ENCODE measurements at regions of chr17 and their contacts with region 1.

Region 1: GRCh38 chr17:30336369-30337171 is 2.7 kb upstream of the TMIGD1 start:
- DNase-seq: no peak
- ATAC-seq: peak in 1 of 4 donors; percentile 27
- H3K4me3 ChIP-seq: no peak overlapping the region
- H3K27ac ChIP-seq: no peak overlapping the region
- H3K4me1 ChIP-seq: peaks cover 0 to 30% (median 8%) of the 10 kb centered on the region in 12 donors
- H3K27me3 ChIP-seq: no peaks in the 10 kb centered on the region
- CTCF ChIP-seq: peak; percentile 13 to 59 (median 47)
- POLR2A ChIP-seq: no peak

Region 2: DNA sequence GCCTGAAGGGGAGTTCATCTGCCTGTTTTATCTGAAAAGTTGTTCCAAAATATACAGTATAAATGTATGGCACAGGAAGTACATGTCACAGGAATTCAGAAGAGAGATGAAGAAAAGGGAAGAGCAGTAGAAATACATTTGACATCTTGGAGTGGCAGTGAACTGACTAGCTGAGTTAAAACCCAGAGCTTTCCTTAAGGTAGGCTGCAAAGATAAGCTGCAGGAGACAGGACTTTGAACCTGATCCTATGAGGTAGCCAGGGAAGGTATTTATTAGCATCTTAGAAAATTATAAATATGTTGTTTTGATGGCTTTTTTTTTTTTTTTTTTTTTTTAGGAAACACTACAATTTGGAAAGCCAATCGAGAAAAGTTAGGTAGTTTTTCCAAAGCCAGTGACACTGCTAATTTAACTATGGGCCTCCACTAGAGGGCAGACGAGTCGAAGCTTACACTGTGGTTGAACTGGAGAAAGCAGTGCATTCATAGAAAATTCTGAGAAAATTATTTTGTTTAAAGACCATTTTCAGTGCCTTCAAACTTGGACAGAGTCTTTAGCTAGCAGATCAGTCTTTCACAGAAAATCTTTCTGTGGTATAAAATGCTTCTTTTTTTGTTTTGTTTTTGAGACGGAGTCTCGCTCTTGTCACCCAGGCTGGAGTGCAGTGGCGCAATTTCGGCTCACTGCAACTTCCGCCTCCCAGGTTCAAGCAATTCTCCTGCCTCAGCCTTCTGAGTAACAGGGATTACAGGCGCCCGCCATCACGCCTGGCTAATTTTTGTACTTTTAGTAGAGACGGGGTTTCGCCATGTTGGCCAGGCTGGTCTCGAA is 528.8 kb before region 1 on chr17:
- intact Hi-C with region 1: no loop called
- DNase-seq: peak in 4 of 5 donors; percentile 54 to 66 (median 60)
- ATAC-seq: peak in 3 of 4 donors; percentile 64 to 84 (median 72)
- H3K4me3 ChIP-seq: peak overlapping the region in 2 of 12 donors; percentile 18 to 36
- H3K27ac ChIP-seq: peak overlapping the region in 1 of 12 donors; percentile 60
- H3K4me1 ChIP-seq: peaks cover 0 to 4% (median 0%) of the 10 kb centered on the region in 12 donors
- H3K27me3 ChIP-seq: no peaks in the 10 kb centered on the region
- CTCF ChIP-seq: peak; percentile 63 to 88 (median 76)
- POLR2A ChIP-seq: no peak

Region 3: DNA sequence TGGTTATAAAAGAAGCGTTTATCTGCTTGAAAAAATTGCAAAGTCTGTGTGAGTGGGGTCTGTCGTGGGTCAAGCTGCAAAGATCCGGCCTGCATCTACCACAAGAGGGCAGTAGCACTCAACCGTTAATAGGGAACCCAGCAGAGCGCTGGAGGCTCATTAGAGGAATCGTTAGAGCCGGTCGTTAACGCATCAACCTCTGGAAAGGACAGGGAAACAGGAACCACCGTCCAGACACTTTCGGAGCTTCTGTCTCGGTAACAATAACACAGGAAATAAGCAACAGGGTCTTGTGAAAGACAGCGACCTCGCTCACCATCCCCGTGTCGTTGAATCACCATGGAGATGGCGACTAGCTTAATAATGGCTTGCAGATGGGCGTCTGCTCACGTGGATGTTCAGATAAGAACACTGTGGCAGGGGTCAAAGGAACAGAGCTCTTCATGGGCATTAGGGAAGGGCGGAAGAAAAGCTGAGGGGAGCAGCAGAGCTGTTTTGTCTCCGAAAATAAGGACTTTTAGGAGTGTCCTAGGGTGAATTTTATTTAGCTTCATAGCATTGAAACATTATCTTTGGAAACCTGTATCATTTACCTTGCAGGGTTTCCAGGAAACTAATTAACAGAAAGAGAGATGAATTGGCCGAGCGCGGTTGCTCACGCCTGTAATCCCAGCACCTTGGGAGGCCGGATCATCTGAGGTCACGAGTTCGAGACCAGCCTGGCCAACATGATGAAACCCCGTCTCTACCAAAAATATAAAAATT is 231.8 kb before region 1 on chr17:
- intact Hi-C with region 1: loop called in 3 of 10 experiments (anchors 2 to 10 kb)
- DNase-seq: peak; percentile 67 to 83 (median 75)
- ATAC-seq: peak; percentile 84 to 98 (median 98)
- H3K4me3 ChIP-seq: peak overlapping the region in 10 of 12 donors; percentile 19 to 61 (median 45)
- H3K27ac ChIP-seq: peak overlapping the region in 7 of 12 donors; percentile 1 to 54 (median 29)
- H3K4me1 ChIP-seq: peaks cover 0 to 10% (median 0%) of the 10 kb centered on the region in 12 donors
- H3K27me3 ChIP-seq: no peaks in the 10 kb centered on the region
- CTCF ChIP-seq: peak; percentile 86 to 96 (median 90)
- POLR2A ChIP-seq: no peak

Region 4: GRCh38 chr17:30124273-30124796 is 212.2 kb before region 1 on chr17:
- intact Hi-C with region 1: loop called in 3 of 10 experiments (anchors 5 to 10 kb)
- DNase-seq: no peak
- ATAC-seq: no peak
- H3K4me3 ChIP-seq: no peak overlapping the region
- H3K27ac ChIP-seq: no peak overlapping the region
- H3K4me1 ChIP-seq: peaks cover 0 to 48% (median 9%) of the 10 kb centered on the region in 12 donors
- H3K27me3 ChIP-seq: no peaks in the 10 kb centered on the region
- CTCF ChIP-seq: no peak
- POLR2A ChIP-seq: no peak

Region 5: GRCh38 chr17:30134551-30134950 is 202.0 kb before region 1 on chr17:
- intact Hi-C with region 1: loop called in 2 of 10 experiments (anchors 5 to 10 kb)
- DNase-seq: no peak
- ATAC-seq: no peak
- H3K4me3 ChIP-seq: no peak overlapping the region
- H3K27ac ChIP-seq: no peak overlapping the region
- H3K4me1 ChIP-seq: peaks cover 0 to 29% (median 7%) of the 10 kb centered on the region in 12 donors
- H3K27me3 ChIP-seq: no peaks in the 10 kb centered on the region
- CTCF ChIP-seq: no peak
- POLR2A ChIP-seq: no peak

Region 6: DNA sequence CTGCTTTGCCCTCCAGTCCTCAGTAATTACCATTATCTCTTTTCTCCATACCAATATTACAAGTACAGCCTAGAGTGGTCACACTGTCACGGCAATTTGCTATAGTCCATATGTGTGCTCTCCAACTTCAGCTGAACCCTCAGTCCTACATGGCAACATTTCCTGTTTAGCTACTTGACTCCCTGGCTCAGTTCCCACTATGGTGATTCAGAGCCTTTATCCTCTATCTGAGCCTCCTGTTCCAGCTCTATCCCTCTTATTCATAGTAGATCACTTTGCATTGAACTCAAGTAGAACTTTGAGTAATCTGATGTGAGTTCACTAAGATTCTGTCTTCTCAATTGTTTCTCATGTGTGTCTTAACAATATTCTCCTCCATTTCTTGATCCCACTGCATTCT is 96.9 kb after region 1 on chr17:
- intact Hi-C with region 1: loop called in 2 of 10 experiments (anchors 5 to 10 kb)
- DNase-seq: no peak
- ATAC-seq: peak in 2 of 4 donors; percentile 49 to 64
- H3K4me3 ChIP-seq: no peak overlapping the region
- H3K27ac ChIP-seq: no peak overlapping the region
- H3K4me1 ChIP-seq: peaks cover 0 to 16% (median 0%) of the 10 kb centered on the region in 12 donors
- H3K27me3 ChIP-seq: no peaks in the 10 kb centered on the region
- CTCF ChIP-seq: no peak
- POLR2A ChIP-seq: no peak

Measured in heart left ventricle (tissue), 16 donors.